CD4-positive, alpha-beta T cell (primary cell): ENCODE measurements at regions of chr20 and their contacts with region 1.

Region 1: GRCh38 chr20:50085452-50086365 is 27.2 kb downstream of the UBE2V1 start:
- DNase-seq: peak in 12 of 14 experiments; percentile 5 to 76 (median 24)
- ATAC-seq: peak; percentile 82
- H3K4me3 ChIP-seq: peak overlapping the region; percentile 39
- H3K4me3 Mint-ChIP-seq: peak overlapping the region; percentile 74
- H3K27ac ChIP-seq: no peak overlapping the region
- H3K27ac Mint-ChIP-seq: peak overlapping the region; percentile 64
- H3K4me1 ChIP-seq: peaks cover 12% of the 10 kb centered on the region
- H3K4me1 Mint-ChIP-seq: peaks cover 41% of the 10 kb centered on the region
- H3K27me3 ChIP-seq: no peaks in the 10 kb centered on the region
- H3K27me3 Mint-ChIP-seq: no peaks in the 10 kb centered on the region
- CTCF ChIP-seq: peak; percentile 82

Region 2: GRCh38 chr20:50070991-50071888 is 14.5 kb before region 1 on chr20:
- CTCF ChIA-PET with region 1: interaction called, 13 read pairs
- POLR2A ChIA-PET with region 1: interaction called, 4 read pairs
- intact Hi-C with region 1: no loop called
- DNase-seq: peak; percentile 71 to 98 (median 91)
- ATAC-seq: peak; percentile 100
- H3K4me3 ChIP-seq: peak overlapping the region; percentile 38
- H3K4me3 Mint-ChIP-seq: peak overlapping the region; percentile 60
- H3K27ac ChIP-seq: no peak overlapping the region
- H3K27ac Mint-ChIP-seq: no peak overlapping the region
- H3K4me1 ChIP-seq: peaks cover 14% of the 10 kb centered on the region
- H3K4me1 Mint-ChIP-seq: peaks cover 5% of the 10 kb centered on the region
- H3K27me3 ChIP-seq: no peaks in the 10 kb centered on the region
- H3K27me3 Mint-ChIP-seq: no peaks in the 10 kb centered on the region
- CTCF ChIP-seq: peak; percentile 99